SK-N-SH (cell line): ENCODE measurements at regions of chr6 and their contacts with region 1.

Region 1: GRCh38 chr6:11496152-11497060 is 41.1 kb upstream of the TMEM170B start:
- DNase-seq: peak; percentile 70
- H3K4me3 ChIP-seq: no peak overlapping the region; a peak in 1 of 4 replicates
- H3K27ac ChIP-seq: peak overlapping the region; percentile 45 to 91
- H3K4me1 ChIP-seq: peaks cover 4 to 24% of the 10 kb centered on the region in 2 experiments; a peak in 3 of 4 replicates
- H3K27me3 ChIP-seq: no peaks in the 10 kb centered on the region
- CTCF ChIP-seq: peak; percentile 96
- EP300 ChIP-seq: peak in 1 of 2 experiments; percentile 61; a peak in 1 of 4 replicates
- RAD21 ChIP-seq: peak; percentile 98

Region 2: GRCh38 chr6:10954590-10955010 is 541.8 kb before region 1 on chr6:
- CTCF ChIA-PET with region 1: interaction called, 19 read pairs
- POLR2A ChIA-PET with region 1: no interaction called
- DNase-seq: peak; percentile 60
- H3K4me3 ChIP-seq: peak overlapping the region in 1 of 2 experiments; percentile 12; a peak in 1 of 4 replicates
- H3K27ac ChIP-seq: no peak overlapping the region
- H3K4me1 ChIP-seq: no peaks in the 10 kb centered on the region; a peak in 1 of 4 replicates
- H3K27me3 ChIP-seq: no peaks in the 10 kb centered on the region
- CTCF ChIP-seq: peak; percentile 69
- EP300 ChIP-seq: no peak
- RAD21 ChIP-seq: peak; percentile 64

Region 3: DNA sequence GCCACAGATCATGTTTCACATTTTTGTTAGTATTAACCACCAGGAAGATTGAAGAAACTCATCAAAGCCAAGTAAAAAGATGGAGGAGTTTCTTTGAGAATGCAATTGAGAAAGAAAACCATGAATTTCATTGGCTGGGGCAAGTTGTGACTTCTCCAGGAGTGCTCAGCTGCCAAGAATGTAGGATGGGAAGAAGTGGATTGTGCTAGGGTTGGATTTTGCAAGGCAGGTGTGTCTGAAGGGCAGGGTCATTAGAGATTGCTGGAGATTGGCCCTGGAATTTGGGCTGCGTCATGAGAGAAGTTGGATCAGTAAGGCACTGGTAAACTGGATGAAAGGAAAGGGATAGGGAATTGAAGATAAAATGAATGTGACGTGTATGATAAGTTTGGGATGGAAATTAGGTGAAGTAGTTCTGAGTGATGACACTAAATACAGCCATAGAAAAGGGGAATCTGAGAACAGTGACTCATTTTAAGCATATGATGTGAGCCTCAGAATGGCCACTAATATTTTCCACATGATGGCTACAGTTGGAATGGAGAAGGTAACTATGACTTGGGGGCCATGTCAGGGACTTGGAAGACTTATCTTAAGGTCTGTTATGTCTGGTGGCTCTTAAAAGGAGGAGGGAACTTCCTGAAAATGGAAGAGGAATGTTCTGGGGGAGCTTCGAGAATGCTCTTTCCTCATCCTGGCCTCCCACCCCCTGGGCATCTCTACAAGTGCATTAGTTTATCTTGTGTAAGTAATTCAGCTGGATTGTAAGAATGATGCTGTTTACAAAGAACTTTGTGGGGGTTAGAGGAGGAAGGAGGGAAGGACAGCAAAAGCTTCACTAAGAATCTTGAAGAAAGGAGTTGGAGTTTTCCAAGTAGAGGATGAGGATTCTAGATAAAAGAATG is 357.1 kb before region 1 on chr6:
- CTCF ChIA-PET with region 1: interaction called, 181 read pairs
- POLR2A ChIA-PET with region 1: no interaction called
- DNase-seq: no peak
- H3K4me3 ChIP-seq: no peak overlapping the region
- H3K27ac ChIP-seq: peak overlapping the region in 1 of 2 experiments; percentile 44; a peak in 2 of 4 replicates
- H3K4me1 ChIP-seq: peaks cover 0 to 33% of the 10 kb centered on the region in 2 experiments; a peak in 3 of 4 replicates
- H3K27me3 ChIP-seq: no peaks in the 10 kb centered on the region
- CTCF ChIP-seq: no peak
- EP300 ChIP-seq: no peak
- RAD21 ChIP-seq: no peak

Region 4: GRCh38 chr6:11218538-11219399 is 277.6 kb before region 1 on chr6:
- CTCF ChIA-PET with region 1: interaction called, 27 read pairs
- POLR2A ChIA-PET with region 1: no interaction called
- DNase-seq: no peak
- H3K4me3 ChIP-seq: no peak overlapping the region; a peak in 1 of 4 replicates
- H3K27ac ChIP-seq: peak overlapping the region in 1 of 2 experiments; percentile 76; a peak in 2 of 4 replicates
- H3K4me1 ChIP-seq: peaks cover 36 to 87% of the 10 kb centered on the region in 2 experiments; a peak in 3 of 4 replicates
- H3K27me3 ChIP-seq: no peaks in the 10 kb centered on the region
- CTCF ChIP-seq: no peak
- EP300 ChIP-seq: no peak
- RAD21 ChIP-seq: no peak

Region 5: DNA sequence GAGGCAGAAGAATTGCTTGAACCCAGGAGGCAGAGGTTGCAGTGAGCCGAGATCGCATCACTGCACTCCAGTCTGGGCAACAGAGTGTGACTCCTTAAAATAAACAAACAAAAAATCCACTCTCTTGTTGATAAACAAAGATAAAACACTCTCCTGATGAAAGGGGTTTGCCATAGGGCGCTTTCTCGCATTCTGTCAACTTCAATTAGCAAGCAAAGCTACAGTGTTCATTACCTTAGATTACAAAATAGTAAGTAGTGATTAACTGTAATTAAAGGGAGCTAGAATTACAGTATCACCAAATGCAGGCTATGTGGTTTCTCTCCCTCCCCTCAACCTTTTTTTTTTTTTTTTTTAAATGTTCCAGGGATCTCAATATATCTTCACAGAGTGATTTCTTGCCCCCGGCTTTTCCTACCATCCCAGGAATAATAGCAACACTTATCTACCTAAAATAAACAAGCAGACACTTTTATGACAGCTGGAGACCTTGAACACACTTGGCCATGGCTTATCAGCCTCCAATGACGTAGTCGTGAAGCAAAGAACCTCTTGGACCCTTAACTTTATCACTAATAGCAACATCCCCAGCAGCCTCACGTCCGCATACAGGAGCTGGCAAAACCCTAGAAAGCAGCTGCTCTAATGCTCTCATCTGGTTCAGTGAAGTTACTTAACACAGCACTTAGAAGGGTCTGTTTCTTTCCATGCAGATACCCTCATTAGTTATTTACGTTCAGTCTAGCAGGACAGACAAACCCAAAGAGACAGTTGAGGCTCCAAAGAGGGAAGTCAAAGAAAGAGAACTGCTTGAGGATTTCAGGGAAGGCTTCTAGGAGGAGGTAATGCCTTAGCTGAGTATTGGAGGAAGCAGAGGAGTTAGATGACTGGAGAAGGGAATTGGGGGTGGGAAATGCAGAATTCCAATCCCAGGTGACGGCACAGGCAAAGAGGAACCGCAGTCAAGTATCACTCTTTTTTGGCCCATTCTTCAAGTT is 226.1 kb before region 1 on chr6:
- CTCF ChIA-PET with region 1: interaction called, 27 read pairs
- POLR2A ChIA-PET with region 1: interaction called, 14 read pairs
- DNase-seq: peak; percentile 73
- H3K4me3 ChIP-seq: no peak overlapping the region
- H3K27ac ChIP-seq: peak overlapping the region in 1 of 2 experiments; percentile 98; a peak in 2 of 4 replicates
- H3K4me1 ChIP-seq: peaks cover 0 to 34% of the 10 kb centered on the region in 2 experiments; a peak in 2 of 4 replicates
- H3K27me3 ChIP-seq: no peaks in the 10 kb centered on the region
- CTCF ChIP-seq: no peak
- EP300 ChIP-seq: peak in 1 of 2 experiments; percentile 91; a peak in 2 of 4 replicates
- RAD21 ChIP-seq: peak; percentile 18; the same call in 1 of the 2 replicates

Region 6: DNA sequence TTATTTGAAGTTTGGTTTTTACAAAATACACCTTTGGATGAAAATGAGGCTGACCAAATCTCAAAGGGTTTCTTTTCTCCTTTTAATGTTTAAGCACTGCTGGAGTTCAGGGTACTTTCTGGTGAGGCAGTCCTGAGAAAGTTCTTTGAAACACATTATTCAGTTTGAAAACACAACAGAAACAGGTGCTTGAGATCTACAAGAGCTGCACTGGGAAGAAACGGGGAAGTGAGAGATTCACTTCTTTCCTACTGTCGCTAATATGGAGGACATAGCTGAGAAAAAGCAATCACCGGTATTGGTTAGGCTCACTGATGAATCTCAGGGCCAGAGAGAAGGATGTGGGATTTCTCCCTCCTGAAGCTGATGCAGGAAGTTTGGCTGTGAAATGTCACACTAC is 18.3 kb after region 1 on chr6:
- CTCF ChIA-PET with region 1: interaction called, 10 read pairs
- POLR2A ChIA-PET with region 1: interaction called, 3 read pairs
- DNase-seq: no peak
- H3K4me3 ChIP-seq: no peak overlapping the region
- H3K27ac ChIP-seq: no peak overlapping the region
- H3K4me1 ChIP-seq: no peaks in the 10 kb centered on the region
- H3K27me3 ChIP-seq: no peaks in the 10 kb centered on the region
- CTCF ChIP-seq: no peak
- EP300 ChIP-seq: no peak
- RAD21 ChIP-seq: no peak

Region 7: GRCh38 chr6:11770546-11771466 is 274.4 kb after region 1 on chr6:
- CTCF ChIA-PET with region 1: no interaction called
- POLR2A ChIA-PET with region 1: no interaction called
- DNase-seq: peak; percentile 24
- H3K4me3 ChIP-seq: no peak overlapping the region
- H3K27ac ChIP-seq: peak overlapping the region; percentile 72 to 97; a peak in 3 of 4 replicates
- H3K4me1 ChIP-seq: peaks cover 5 to 51% of the 10 kb centered on the region in 2 experiments
- H3K27me3 ChIP-seq: no peaks in the 10 kb centered on the region
- CTCF ChIP-seq: no peak
- EP300 ChIP-seq: peak in 1 of 2 experiments; percentile 81; a peak in 1 of 4 replicates
- RAD21 ChIP-seq: no peak

Region 8: GRCh38 chr6:12262236-12263061 is 766.0 kb after region 1 on chr6:
- CTCF ChIA-PET with region 1: no interaction called
- POLR2A ChIA-PET with region 1: no interaction called
- DNase-seq: no peak
- H3K4me3 ChIP-seq: no peak overlapping the region
- H3K27ac ChIP-seq: no peak overlapping the region
- H3K4me1 ChIP-seq: 0 out of 4 replicates have a peak, but pooled peaks cover 0 to 6% of the 10 kb centered on the region in 2 experiments
- H3K27me3 ChIP-seq: no peaks in the 10 kb centered on the region
- CTCF ChIP-seq: no peak
- EP300 ChIP-seq: no peak
- RAD21 ChIP-seq: no peak